Activated CD4-positive, alpha-beta T cell treated with anti-CD3 and anti-CD28 coated beads, Interleukin-2, amount 10 ng/mL, durations not matched to agents 24 days and 14 days (primary cell): ENCODE measurements at regions of chr2 and their contacts with region 1.

Region 1: GRCh38 chr2:106542811-106543259 is 55.7 kb downstream of the CD8B2 start:
- DNase-seq: peak; percentile 92
- H3K4me3 Mint-ChIP-seq: peak overlapping the region; percentile 76
- H3K27ac Mint-ChIP-seq: no peak overlapping the region
- H3K4me1 Mint-ChIP-seq: peaks cover 2% of the 10 kb centered on the region
- H3K27me3 Mint-ChIP-seq: peaks cover 29% of the 10 kb centered on the region

Region 2: DNA sequence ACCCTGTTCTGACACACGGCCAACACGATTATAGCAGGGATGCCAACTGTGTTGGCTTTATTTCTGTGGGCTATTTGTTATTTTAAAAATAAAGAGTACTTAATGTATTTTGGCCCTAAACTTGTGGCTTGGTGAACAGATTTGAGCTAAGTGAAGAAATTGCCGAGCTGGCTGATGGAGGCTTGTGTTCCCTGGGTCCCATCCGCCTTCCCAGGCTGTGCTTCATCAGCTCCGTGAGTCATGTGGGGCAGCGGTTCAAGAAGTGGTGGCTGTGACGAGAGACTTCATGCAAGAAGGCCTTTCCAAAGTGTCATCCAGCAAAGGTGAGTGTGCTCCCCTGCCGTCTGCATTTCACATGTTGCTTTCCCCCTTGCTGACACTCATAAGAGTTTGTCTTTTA is 871.7 kb before region 1 on chr2:
- intact Hi-C with region 1: no loop called
- DNase-seq: peak; percentile 41
- H3K4me3 Mint-ChIP-seq: no peak overlapping the region
- H3K27ac Mint-ChIP-seq: no peak overlapping the region
- H3K4me1 Mint-ChIP-seq: peaks cover 13% of the 10 kb centered on the region
- H3K27me3 Mint-ChIP-seq: no peaks in the 10 kb centered on the region

Region 3: GRCh38 chr2:106261871-106262321 is 280.9 kb before region 1 on chr2:
- intact Hi-C with region 1: loop called (anchors 10 kb)
- DNase-seq: no peak
- H3K4me3 Mint-ChIP-seq: no peak overlapping the region
- H3K27ac Mint-ChIP-seq: no peak overlapping the region
- H3K4me1 Mint-ChIP-seq: no peaks in the 10 kb centered on the region
- H3K27me3 Mint-ChIP-seq: peaks cover 4% of the 10 kb centered on the region